CD8-positive, alpha-beta T cell (primary cell): ENCODE measurements at regions of chr15 and their contacts with region 1.

Region 1: GRCh38 chr15:40108855-40109735 is at the start of gene BMF:
- DNase-seq: peak; percentile 89 to 98 (median 96)
- ATAC-seq: peak; percentile 87
- H3K4me3 ChIP-seq: peak within 1 kb of the TSS; percentile 72 to 90
- H3K4me3 Mint-ChIP-seq: peak within 1 kb of the TSS; percentile 92
- H3K27ac ChIP-seq: peak within 1 kb of the TSS; percentile 18 to 26
- H3K27ac Mint-ChIP-seq: peak within 1 kb of the TSS; percentile 60
- H3K4me1 ChIP-seq: peaks cover 30% of the 10 kb centered on the region
- H3K4me1 Mint-ChIP-seq: peaks cover 34% of the 10 kb centered on the region
- H3K27me3 ChIP-seq: no peaks in the 10 kb centered on the region
- H3K27me3 Mint-ChIP-seq: peaks cover 8% of the 10 kb centered on the region
- CTCF ChIP-seq: no peak
- total RNA-seq, gene BMF: 9.6 to 11.2 TPM

Region 2: DNA sequence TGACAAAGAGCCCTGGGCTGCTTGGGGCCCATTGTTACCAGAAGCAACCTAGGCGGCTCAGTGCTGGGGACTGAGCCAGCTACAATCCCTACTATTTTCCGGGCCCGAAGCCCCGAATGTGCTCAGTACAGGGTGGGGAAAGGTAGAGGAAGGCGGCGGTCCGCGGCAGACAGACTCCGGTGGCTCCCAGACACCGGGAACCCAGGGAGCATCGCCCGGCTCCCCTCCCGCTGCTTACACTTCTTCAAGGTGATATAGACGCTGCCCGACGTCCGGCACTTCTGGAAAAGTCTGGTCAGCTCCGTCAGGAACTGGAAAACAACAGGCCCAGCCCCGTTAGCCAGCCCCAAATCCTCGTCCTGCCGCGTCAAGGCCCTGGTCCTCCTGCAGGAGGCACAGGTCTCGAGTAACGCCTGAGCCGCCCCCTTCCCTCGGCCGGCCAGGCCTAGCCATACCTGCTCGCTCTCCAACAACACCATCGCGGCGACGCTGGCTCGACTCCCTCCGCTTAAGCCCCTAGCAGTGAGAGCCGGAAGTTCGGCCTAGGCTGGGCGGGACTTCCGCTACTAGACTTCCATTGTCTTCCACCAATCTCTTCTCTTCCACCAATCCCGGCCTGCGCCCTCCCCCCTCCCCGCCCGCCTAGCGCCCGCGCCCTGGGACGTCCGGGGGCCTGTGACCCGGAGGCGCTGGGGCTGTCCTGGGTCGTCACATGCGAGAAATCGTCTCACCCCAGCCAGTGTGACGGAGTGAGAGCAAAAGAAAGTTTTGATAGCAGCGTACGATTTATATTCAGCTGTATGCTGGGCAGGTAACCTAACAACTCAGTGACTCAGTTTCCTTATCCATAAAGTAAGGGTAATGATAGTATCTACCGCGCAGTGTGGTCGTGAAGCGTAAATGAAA is 70.2 kb before region 1 on chr15 and contains the start of gene SRP14:
- CTCF ChIA-PET with region 1: interaction called, 192 read pairs
- POLR2A ChIA-PET with region 1: interaction called, 4 read pairs
- intact Hi-C with region 1: loop called (anchors 1 to 2 kb)
- DNase-seq: peak; percentile 86 to 96 (median 93)
- ATAC-seq: peak; percentile 94
- H3K4me3 ChIP-seq: peak within 1 kb of the TSS; percentile 92 to 99
- H3K4me3 Mint-ChIP-seq: peak within 1 kb of the TSS; percentile 99
- H3K27ac ChIP-seq: peak within 1 kb of the TSS; percentile 84 to 96
- H3K27ac Mint-ChIP-seq: peak within 1 kb of the TSS; percentile 99
- H3K4me1 ChIP-seq: peaks cover 16% of the 10 kb centered on the region
- H3K4me1 Mint-ChIP-seq: peaks cover 43% of the 10 kb centered on the region
- H3K27me3 ChIP-seq: no peaks in the 10 kb centered on the region
- H3K27me3 Mint-ChIP-seq: no peaks in the 10 kb centered on the region
- CTCF ChIP-seq: no peak
- total RNA-seq, gene SRP14: 133 to 135 TPM

Region 3: DNA sequence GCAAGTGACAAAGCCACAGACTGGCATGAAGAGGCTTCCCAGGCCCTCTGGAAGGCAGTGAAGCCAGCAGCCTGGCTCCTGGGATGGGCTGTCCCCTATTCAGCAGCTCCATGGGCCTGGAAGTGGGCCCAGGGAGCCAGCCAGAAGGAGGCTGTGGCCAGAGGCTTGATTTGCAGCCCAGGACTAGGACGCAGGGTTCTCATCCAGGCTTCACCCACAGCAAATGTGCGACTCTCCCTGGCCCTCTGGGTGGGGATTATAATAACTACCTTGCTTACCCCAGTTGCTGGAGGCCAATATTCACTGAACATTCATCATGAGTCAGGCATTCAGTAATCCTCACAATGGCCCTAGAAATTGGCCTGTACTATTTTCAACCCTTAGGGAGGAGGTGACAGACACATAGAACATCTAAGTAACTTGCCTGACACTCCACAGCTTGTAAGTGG is 45.5 kb before region 1 on chr15:
- CTCF ChIA-PET with region 1: interaction called, 15 read pairs
- POLR2A ChIA-PET with region 1: no interaction called
- intact Hi-C with region 1: no loop called
- DNase-seq: no peak
- ATAC-seq: no peak
- H3K4me3 ChIP-seq: no peak overlapping the region
- H3K4me3 Mint-ChIP-seq: no peak overlapping the region
- H3K27ac ChIP-seq: no peak overlapping the region
- H3K27ac Mint-ChIP-seq: peak overlapping the region; percentile 60
- H3K4me1 ChIP-seq: no peaks in the 10 kb centered on the region
- H3K4me1 Mint-ChIP-seq: peaks cover 15% of the 10 kb centered on the region
- H3K27me3 ChIP-seq: no peaks in the 10 kb centered on the region
- H3K27me3 Mint-ChIP-seq: no peaks in the 10 kb centered on the region
- CTCF ChIP-seq: no peak

Region 4: GRCh38 chr15:40098489-40099261 is 10.4 kb before region 1 on chr15:
- CTCF ChIA-PET with region 1: interaction called, 54 read pairs
- POLR2A ChIA-PET with region 1: interaction called, 7 read pairs
- intact Hi-C with region 1: loop called in 1 of 2 experiments (anchors 1 kb)
- DNase-seq: peak; percentile 19 to 78 (median 64)
- ATAC-seq: peak; percentile 92
- H3K4me3 ChIP-seq: no peak overlapping the region
- H3K4me3 Mint-ChIP-seq: peak overlapping the region; percentile 61
- H3K27ac ChIP-seq: peak overlapping the region in 1 of 2 experiments; percentile 74
- H3K27ac Mint-ChIP-seq: peak overlapping the region; percentile 89
- H3K4me1 ChIP-seq: peaks cover 31% of the 10 kb centered on the region
- H3K4me1 Mint-ChIP-seq: peaks cover 42% of the 10 kb centered on the region
- H3K27me3 ChIP-seq: no peaks in the 10 kb centered on the region
- H3K27me3 Mint-ChIP-seq: no peaks in the 10 kb centered on the region
- CTCF ChIP-seq: no peak

Region 5: DNA sequence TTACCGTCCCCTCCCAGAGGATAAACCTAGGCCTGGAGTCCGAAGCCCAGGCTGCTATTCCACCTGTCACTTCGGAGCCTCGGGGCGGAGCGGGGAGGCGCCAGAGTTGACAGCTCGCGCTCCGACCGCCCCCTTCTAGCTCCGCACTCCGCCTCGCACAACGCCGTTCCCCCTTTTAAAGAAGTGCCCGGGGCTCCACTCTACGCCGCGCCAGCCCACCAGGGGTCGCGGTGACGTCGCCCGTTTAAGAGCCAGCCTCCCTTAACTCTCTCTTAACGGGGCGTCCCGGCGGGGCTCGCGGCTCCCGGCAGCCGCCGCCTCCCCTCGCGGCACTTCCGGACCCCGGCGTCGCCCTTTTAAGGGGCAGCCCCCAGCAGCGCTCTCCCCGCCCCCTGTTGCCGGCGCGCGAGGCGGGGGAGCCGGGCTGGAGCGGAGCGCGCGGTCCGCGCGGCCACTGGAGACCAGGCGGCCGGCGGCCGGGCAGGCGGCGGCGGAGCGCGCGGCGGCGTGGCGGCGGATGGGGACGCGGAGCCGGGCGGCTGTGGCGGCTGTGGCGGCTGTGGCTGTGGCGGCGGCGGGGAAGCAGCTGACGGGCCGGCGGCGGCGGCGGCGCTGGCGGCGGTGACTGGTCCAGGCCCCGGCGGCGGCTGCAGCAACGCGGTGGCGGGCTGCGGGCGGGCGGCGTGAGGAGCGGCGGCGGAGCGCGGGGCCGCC is 214.3 kb after region 1 on chr15 and contains the start of gene INAFM2:
- CTCF ChIA-PET with region 1: interaction called, 3 read pairs
- POLR2A ChIA-PET with region 1: no interaction called
- intact Hi-C with region 1: loop called in 1 of 2 experiments (anchors 5 kb)
- DNase-seq: peak; percentile 79 to 97 (median 93)
- ATAC-seq: peak; percentile 90
- H3K4me3 ChIP-seq: peak within 1 kb of the TSS; percentile 34 to 45
- H3K4me3 Mint-ChIP-seq: peak within 1 kb of the TSS; percentile 80
- H3K27ac ChIP-seq: peak within 1 kb of the TSS in 1 of 2 experiments; percentile 47
- H3K27ac Mint-ChIP-seq: peak within 1 kb of the TSS; percentile 74
- H3K4me1 ChIP-seq: peaks cover 21% of the 10 kb centered on the region
- H3K4me1 Mint-ChIP-seq: peaks cover 22% of the 10 kb centered on the region
- H3K27me3 ChIP-seq: no peaks in the 10 kb centered on the region
- H3K27me3 Mint-ChIP-seq: no peaks in the 10 kb centered on the region
- CTCF ChIP-seq: peak; percentile 60
- total RNA-seq, gene INAFM2: 4.3 to 8.1 TPM